Activated CD8-positive, alpha-beta T cell treated with anti-CD3 and anti-CD28 coated beads for 36 hours (primary cell): ENCODE measurements at regions of chr19 and their contacts with region 1.

Region 1: DNA sequence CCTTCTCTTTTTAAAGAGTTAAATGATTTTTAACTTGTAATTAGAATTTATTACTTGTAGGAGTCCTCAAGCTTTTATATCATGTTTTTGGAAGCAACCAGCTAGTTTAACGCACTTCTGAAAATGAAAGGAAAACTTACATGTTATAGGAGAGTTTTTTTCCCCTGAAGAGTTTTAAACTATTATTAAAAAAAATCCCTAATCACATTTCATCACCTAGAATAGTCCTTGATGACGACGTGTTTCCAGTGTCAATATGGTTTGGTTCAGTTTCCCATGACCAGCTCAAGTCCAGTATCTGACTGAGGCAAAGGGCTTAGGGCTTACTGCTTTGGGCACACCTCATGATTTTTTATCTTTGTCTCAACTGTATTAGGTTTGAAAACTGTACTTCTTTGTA is 36.0 kb downstream of the URI1 start:
- DNase-seq: peak; percentile 5
- ATAC-seq: peak; percentile 34
- H3K4me3 Mint-ChIP-seq: peak overlapping the region; percentile 32
- H3K27ac Mint-ChIP-seq: peak overlapping the region; percentile 34
- H3K4me1 Mint-ChIP-seq: peaks cover 54% of the 10 kb centered on the region
- H3K27me3 Mint-ChIP-seq: no peaks in the 10 kb centered on the region
- CTCF ChIP-seq: no peak

Region 2: GRCh38 chr19:29831041-29831548 is 147.0 kb before region 1 on chr19:
- CTCF ChIA-PET with region 1: no interaction called
- POLR2A ChIA-PET with region 1: no interaction called
- intact Hi-C with region 1: no loop called
- DNase-seq: peak; percentile 78
- ATAC-seq: peak; percentile 96
- H3K4me3 Mint-ChIP-seq: peak overlapping the region; percentile 53
- H3K27ac Mint-ChIP-seq: peak overlapping the region; percentile 88
- H3K4me1 Mint-ChIP-seq: peaks cover 44% of the 10 kb centered on the region
- H3K27me3 Mint-ChIP-seq: no peaks in the 10 kb centered on the region
- CTCF ChIP-seq: no peak

Region 3: DNA sequence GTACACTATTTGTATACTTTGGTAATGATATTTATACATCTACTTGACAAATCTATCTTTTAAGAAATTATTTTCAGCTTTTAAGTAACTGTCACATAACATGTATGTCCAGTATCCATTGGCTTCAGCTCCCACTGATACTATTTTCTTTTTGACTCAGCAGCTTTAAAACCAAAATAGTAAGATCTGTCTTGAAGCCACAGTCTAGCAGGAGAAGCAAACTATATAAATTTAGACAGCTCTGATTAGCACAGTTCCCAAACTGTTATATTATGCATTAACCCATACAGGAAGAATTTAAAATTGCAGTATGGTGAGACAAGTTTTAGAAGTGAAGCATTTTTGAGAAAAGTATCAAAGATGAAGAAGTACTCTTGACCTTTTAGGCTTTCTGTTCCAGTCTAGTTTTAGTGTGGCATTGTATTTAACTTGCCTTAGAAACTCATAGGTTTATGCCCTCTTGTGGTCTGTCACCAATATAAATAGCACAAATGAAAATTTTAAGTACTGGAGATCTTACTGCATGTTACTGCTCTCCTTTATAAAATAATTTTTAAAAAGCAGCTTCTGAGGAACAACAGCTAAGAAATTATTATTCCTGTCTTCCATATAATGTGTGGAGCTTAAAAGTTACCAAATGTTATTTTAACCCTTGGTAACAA is 11.4 kb before region 1 on chr19:
- CTCF ChIA-PET with region 1: interaction called, 16 read pairs
- POLR2A ChIA-PET with region 1: no interaction called
- intact Hi-C with region 1: no loop called
- DNase-seq: no peak
- ATAC-seq: no peak
- H3K4me3 Mint-ChIP-seq: no peak overlapping the region
- H3K27ac Mint-ChIP-seq: no peak overlapping the region
- H3K4me1 Mint-ChIP-seq: peaks cover 81% of the 10 kb centered on the region
- H3K27me3 Mint-ChIP-seq: no peaks in the 10 kb centered on the region
- CTCF ChIP-seq: no peak

Region 4: DNA sequence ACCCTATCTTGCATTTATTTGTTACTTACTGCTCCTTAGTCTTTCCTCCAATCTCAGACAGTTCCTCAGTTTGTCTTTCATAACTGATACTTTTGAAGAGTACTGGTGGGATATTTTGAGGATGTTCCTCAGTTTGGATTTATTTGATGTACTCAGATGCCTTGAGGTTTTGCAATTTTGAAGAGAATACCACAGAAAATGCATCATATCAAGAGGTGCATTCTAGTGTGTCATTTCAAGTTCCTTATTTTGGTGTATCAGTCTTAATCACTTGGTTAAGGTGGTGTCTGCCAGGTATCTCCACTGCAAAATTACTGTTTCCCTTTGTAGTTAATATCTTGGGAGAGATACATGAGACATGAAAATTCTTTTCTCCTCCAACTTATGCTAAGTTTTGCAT is 39.1 kb after region 1 on chr19:
- CTCF ChIA-PET with region 1: no interaction called
- POLR2A ChIA-PET with region 1: no interaction called
- intact Hi-C with region 1: no loop called
- DNase-seq: no peak
- ATAC-seq: no peak
- H3K4me3 Mint-ChIP-seq: no peak overlapping the region
- H3K27ac Mint-ChIP-seq: no peak overlapping the region
- H3K4me1 Mint-ChIP-seq: peaks cover 4% of the 10 kb centered on the region
- H3K27me3 Mint-ChIP-seq: no peaks in the 10 kb centered on the region
- CTCF ChIP-seq: no peak